Activated CD4-positive, alpha-beta memory T cell treated with anti-CD3 and anti-CD28 coated beads for 36 hours (primary cell): ENCODE measurements at regions of chr11 and their contacts with region 1.

Region 1: DNA sequence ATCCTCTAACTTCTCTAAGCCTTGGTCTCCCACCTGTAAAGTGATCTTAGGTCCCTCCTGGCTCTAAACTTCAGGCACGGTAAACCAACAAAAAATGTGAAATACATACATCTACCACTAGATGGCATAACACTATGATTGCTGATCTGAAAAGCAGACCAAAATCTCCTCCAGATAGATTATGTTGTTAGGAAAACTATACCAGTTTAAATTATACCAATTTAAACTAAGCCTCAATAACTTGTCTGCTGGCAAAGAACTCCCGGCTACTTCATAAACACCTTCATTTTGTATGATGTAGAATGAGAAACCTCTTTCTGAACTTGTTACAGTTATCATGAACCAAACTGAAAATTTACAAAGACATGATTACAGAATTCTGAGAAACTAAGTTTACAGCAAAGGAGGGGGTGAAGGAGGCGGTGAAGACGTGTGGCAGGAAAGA is 85.9 kb downstream of the SBF2 start:
- DNase-seq: no peak
- H3K4me3 Mint-ChIP-seq: no peak overlapping the region
- H3K27ac Mint-ChIP-seq: no peak overlapping the region
- H3K4me1 Mint-ChIP-seq: no peaks in the 10 kb centered on the region
- H3K27me3 Mint-ChIP-seq: no peaks in the 10 kb centered on the region

Region 2: GRCh38 chr11:9861860-9862725 is 346.1 kb before region 1 on chr11:
- CTCF ChIA-PET with region 1: no interaction called
- POLR2A ChIA-PET with region 1: no interaction called
- intact Hi-C with region 1: loop called (anchors 5 kb)
- DNase-seq: peak; percentile 65
- H3K4me3 Mint-ChIP-seq: no peak overlapping the region
- H3K27ac Mint-ChIP-seq: no peak overlapping the region
- H3K4me1 Mint-ChIP-seq: peaks cover 27% of the 10 kb centered on the region
- H3K27me3 Mint-ChIP-seq: no peaks in the 10 kb centered on the region

Region 3: GRCh38 chr11:9906043-9906791 is 301.9 kb before region 1 on chr11:
- CTCF ChIA-PET with region 1: no interaction called
- POLR2A ChIA-PET with region 1: no interaction called
- intact Hi-C with region 1: no loop called
- DNase-seq: no peak
- H3K4me3 Mint-ChIP-seq: no peak overlapping the region
- H3K27ac Mint-ChIP-seq: no peak overlapping the region
- H3K4me1 Mint-ChIP-seq: no peaks in the 10 kb centered on the region
- H3K27me3 Mint-ChIP-seq: no peaks in the 10 kb centered on the region

Region 4: GRCh38 chr11:10181811-10182210 is 26.3 kb before region 1 on chr11:
- CTCF ChIA-PET with region 1: interaction called, 11 read pairs
- POLR2A ChIA-PET with region 1: interaction called, 3 read pairs
- intact Hi-C with region 1: no loop called
- DNase-seq: no peak
- H3K4me3 Mint-ChIP-seq: no peak overlapping the region
- H3K27ac Mint-ChIP-seq: no peak overlapping the region
- H3K4me1 Mint-ChIP-seq: no peaks in the 10 kb centered on the region
- H3K27me3 Mint-ChIP-seq: no peaks in the 10 kb centered on the region

Region 5: DNA sequence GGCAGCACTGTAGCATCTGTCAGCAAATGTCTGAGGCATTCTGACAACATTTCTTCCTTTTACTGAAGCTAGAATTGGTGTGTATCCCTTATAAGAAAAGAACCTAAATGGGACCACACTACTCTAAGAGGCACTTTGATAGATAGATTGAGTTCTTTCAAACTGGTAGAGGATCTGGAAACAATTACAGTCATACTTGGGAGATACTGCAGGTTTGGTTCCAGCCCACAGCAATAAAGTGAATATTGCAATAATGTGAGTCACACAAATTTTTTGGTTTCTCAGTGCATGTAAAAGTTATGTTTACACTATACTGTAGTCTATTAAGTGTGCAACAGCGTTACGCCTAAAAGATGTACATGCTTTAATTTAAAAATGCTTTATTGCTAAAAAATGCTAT is 11.1 kb before region 1 on chr11:
- CTCF ChIA-PET with region 1: interaction called, 14 read pairs
- POLR2A ChIA-PET with region 1: no interaction called
- intact Hi-C with region 1: no loop called
- DNase-seq: no peak
- H3K4me3 Mint-ChIP-seq: no peak overlapping the region
- H3K27ac Mint-ChIP-seq: no peak overlapping the region
- H3K4me1 Mint-ChIP-seq: peaks cover 2% of the 10 kb centered on the region
- H3K27me3 Mint-ChIP-seq: no peaks in the 10 kb centered on the region

Region 6: DNA sequence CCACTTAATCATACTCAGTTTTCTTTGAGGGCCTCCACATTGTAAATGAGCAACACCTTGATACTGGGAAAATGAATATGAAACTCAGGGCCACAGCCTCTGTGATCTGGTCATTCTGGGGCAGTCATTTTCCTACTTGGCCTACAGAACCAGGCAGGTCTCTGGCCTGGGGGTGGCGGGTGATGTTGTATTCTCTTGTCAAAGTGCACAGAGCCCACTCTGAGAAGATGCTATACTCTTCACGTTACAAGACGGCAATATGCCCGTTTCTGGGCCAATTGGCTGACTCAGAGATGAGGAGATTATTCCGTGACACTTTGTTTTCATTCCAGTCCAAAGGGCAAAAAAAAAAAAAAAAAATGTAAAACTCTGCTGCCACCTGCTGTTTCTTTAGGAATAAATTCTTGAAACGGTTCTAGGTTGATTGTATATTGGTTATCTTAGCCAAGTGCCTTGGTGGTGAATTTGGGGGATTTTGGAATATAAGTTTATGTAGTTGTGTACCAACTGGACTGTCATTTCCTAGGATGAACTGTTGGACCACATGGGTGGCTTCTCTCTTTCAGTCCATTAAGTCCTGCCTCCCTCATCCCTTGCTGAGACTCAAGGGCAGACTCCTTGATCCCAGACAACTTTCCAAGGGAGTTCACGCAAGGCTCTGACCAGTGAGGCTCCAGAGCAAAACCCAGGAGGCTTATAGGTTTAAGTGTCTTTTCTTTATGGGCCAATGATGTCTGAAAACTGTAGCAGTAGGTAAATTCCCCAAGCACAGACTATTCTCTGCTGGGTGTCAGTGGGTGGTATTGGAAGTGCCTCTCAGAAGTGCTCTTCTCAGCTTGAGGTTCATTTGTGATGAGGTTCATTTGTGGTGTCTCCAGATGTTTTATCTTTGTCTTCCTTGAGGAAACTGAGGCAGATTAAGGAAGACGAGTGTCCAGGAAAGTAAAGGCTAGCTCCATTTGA is 115.0 kb after region 1 on chr11:
- CTCF ChIA-PET with region 1: interaction called, 16 read pairs
- POLR2A ChIA-PET with region 1: no interaction called
- intact Hi-C with region 1: loop called (anchors 1 kb)
- DNase-seq: peak; percentile 67
- H3K4me3 Mint-ChIP-seq: peak overlapping the region; percentile 48
- H3K27ac Mint-ChIP-seq: peak overlapping the region; percentile 77
- H3K4me1 Mint-ChIP-seq: peaks cover 13% of the 10 kb centered on the region
- H3K27me3 Mint-ChIP-seq: peaks cover 7% of the 10 kb centered on the region

Region 7: GRCh38 chr11:10366568-10367370 is 158.6 kb after region 1 on chr11:
- CTCF ChIA-PET with region 1: interaction called, 11 read pairs
- POLR2A ChIA-PET with region 1: no interaction called
- intact Hi-C with region 1: no loop called
- DNase-seq: peak; percentile 79
- H3K4me3 Mint-ChIP-seq: no peak overlapping the region
- H3K27ac Mint-ChIP-seq: no peak overlapping the region
- H3K4me1 Mint-ChIP-seq: peaks cover 6% of the 10 kb centered on the region
- H3K27me3 Mint-ChIP-seq: peaks cover 3% of the 10 kb centered on the region

Region 8: GRCh38 chr11:10735481-10736475 is 527.6 kb after region 1 on chr11:
- CTCF ChIA-PET with region 1: no interaction called
- POLR2A ChIA-PET with region 1: no interaction called
- intact Hi-C with region 1: loop called (anchors 5 kb)
- DNase-seq: peak; percentile 92
- H3K4me3 Mint-ChIP-seq: peak overlapping the region; percentile 53
- H3K27ac Mint-ChIP-seq: no peak overlapping the region
- H3K4me1 Mint-ChIP-seq: peaks cover 11% of the 10 kb centered on the region
- H3K27me3 Mint-ChIP-seq: peaks cover 2% of the 10 kb centered on the region